Endothelial cell of umbilical vein (primary cell): ENCODE measurements at regions of chr2 and their contacts with region 1.

Region 1: DNA sequence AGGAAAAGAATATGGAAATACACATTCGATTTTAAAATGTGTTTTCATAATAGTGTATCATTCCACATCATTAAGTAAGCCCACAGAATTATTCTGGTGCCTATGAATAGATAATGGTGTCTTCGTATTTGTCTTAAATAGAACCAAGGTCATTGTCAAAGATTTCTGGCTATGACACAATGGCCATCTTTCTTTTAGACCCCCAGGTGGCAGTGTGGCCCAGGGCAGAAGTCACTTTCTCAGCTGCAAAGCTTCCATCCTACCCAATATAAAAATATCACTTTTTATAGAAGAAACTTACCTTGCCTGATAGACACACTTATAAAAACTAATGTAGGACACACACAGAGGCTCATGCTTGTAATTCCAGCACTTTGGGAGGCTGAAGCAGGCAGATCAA is 57.5 kb downstream of the ZRANB3 start:
- DNase-seq: peak; percentile 42
- H3K4me3 ChIP-seq: no peak overlapping the region
- H3K27ac ChIP-seq: no peak overlapping the region
- H3K4me1 ChIP-seq: no peaks in the 10 kb centered on the region
- H3K27me3 ChIP-seq: no peaks in the 10 kb centered on the region
- CTCF ChIP-seq: peak; percentile 56 to 69
- POLR2A ChIP-seq: no peak

Region 2: DNA sequence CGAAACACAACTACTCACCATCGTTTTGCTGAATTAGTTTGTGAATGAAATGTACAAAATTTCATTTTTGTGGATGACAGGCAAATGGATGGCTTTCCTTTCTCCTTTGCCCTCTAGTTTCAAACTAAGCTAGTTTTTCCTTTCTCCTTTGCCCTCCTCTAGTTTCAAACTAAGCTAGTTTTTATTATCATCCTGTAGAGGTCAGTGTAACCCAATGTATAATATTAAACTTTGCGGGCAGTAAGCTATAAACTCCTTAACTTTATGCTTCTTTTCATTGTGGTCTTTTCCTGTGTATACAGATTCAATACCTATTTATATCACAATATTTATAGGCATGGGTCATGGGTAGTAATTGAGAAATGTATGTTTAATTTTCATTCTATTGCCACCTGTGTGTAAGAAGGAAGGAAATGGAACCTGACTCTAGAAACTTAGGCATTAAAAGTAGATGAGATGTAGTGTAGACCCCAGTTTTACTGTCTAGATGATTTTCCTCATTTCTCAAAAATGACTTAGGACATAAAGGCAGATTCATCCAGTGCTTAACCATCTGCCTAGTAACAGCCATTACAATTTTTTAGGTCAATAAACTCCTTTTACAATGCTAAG is 484.5 kb before region 1 on chr2:
- CTCF ChIA-PET with region 1: interaction called, 12 read pairs
- POLR2A ChIA-PET with region 1: no interaction called
- dilution Hi-C with region 1: no loop called
- intact Hi-C with region 1: no loop called
- DNase-seq: peak; percentile 34
- H3K4me3 ChIP-seq: no peak overlapping the region
- H3K27ac ChIP-seq: no peak overlapping the region
- H3K4me1 ChIP-seq: no peaks in the 10 kb centered on the region
- H3K27me3 ChIP-seq: peaks cover 10 to 31% of the 10 kb centered on the region in 2 experiments
- CTCF ChIP-seq: peak; percentile 15 to 33
- POLR2A ChIP-seq: no peak

Region 3: DNA sequence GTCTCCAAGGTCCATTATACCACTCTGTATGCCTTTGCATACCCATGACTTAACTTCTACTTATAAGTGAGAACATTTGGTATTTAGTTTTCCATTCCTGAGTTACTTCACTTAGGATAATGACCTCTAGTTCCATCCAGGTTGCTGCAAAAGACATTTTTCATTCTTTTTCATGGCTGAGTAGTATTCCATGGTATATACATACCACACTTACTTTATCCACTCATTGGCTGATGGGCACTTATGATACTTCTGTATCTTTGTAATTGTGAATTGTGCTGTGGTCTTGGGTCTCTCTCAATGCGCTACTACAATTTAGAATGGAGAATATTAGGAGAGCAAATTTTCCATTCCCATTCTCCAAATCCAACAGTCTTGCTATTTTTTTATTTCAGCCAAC is 19.0 kb before region 1 on chr2:
- CTCF ChIA-PET with region 1: no interaction called
- POLR2A ChIA-PET with region 1: no interaction called
- dilution Hi-C with region 1: no loop called
- intact Hi-C with region 1: no loop called
- DNase-seq: no peak
- H3K4me3 ChIP-seq: no peak overlapping the region
- H3K27ac ChIP-seq: no peak overlapping the region
- H3K4me1 ChIP-seq: no peaks in the 10 kb centered on the region
- H3K27me3 ChIP-seq: no peaks in the 10 kb centered on the region
- CTCF ChIP-seq: no peak
- POLR2A ChIP-seq: no peak

Region 4: GRCh38 chr2:135525786-135526185 is 52.2 kb after region 1 on chr2:
- CTCF ChIA-PET with region 1: interaction called, 14 read pairs
- POLR2A ChIA-PET with region 1: no interaction called
- dilution Hi-C with region 1: no loop called
- intact Hi-C with region 1: no loop called
- DNase-seq: no peak
- H3K4me3 ChIP-seq: no peak overlapping the region
- H3K27ac ChIP-seq: no peak overlapping the region
- H3K4me1 ChIP-seq: peaks cover 12% of the 10 kb centered on the region
- H3K27me3 ChIP-seq: no peaks in the 10 kb centered on the region
- CTCF ChIP-seq: no peak
- POLR2A ChIP-seq: no peak

Region 5: GRCh38 chr2:135585586-135585985 is 112.0 kb after region 1 on chr2:
- CTCF ChIA-PET with region 1: interaction called, 20 read pairs
- POLR2A ChIA-PET with region 1: no interaction called
- dilution Hi-C with region 1: no loop called
- intact Hi-C with region 1: no loop called
- DNase-seq: no peak
- H3K4me3 ChIP-seq: no peak overlapping the region
- H3K27ac ChIP-seq: no peak overlapping the region
- H3K4me1 ChIP-seq: no peaks in the 10 kb centered on the region
- H3K27me3 ChIP-seq: no peaks in the 10 kb centered on the region
- CTCF ChIP-seq: no peak
- POLR2A ChIP-seq: no peak

Region 6: DNA sequence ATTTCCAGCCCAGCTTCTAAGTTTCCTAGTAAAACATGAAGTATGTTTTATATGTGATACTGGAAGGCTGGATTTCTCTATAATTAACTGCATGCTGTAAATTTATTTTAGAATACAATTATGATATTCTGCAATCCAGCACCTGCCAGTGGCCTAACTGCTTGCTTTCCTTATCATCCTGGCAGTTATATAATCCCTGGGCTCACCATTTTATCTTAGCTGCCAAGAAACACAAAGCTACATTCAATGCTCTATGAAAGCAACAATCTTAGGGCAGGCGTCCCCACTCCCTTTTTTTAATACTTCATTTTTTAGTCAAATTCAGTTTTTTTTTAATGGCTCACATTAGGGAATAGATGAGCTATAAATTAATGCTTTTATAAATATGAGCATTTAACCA is 229.7 kb after region 1 on chr2:
- CTCF ChIA-PET with region 1: interaction called, 248 read pairs
- POLR2A ChIA-PET with region 1: no interaction called
- dilution Hi-C with region 1: no loop called
- intact Hi-C with region 1: no loop called
- DNase-seq: no peak
- H3K4me3 ChIP-seq: no peak overlapping the region
- H3K27ac ChIP-seq: no peak overlapping the region
- H3K4me1 ChIP-seq: no peaks in the 10 kb centered on the region
- H3K27me3 ChIP-seq: no peaks in the 10 kb centered on the region
- CTCF ChIP-seq: no peak
- POLR2A ChIP-seq: no peak

Region 7: GRCh38 chr2:135797497-135798274 is 324.1 kb after region 1 on chr2:
- CTCF ChIA-PET with region 1: interaction called, 26 read pairs
- POLR2A ChIA-PET with region 1: no interaction called
- dilution Hi-C with region 1: no loop called
- intact Hi-C with region 1: loop called (anchors 5 kb)
- DNase-seq: peak; percentile 71
- H3K4me3 ChIP-seq: no peak overlapping the region
- H3K27ac ChIP-seq: no peak overlapping the region
- H3K4me1 ChIP-seq: no peaks in the 10 kb centered on the region
- H3K27me3 ChIP-seq: no peaks in the 10 kb centered on the region
- CTCF ChIP-seq: peak; percentile 95 to 96
- POLR2A ChIP-seq: no peak